ENCODE measurements at regions of chr13 and their contacts with region 1.

Region 1: GRCh38 chr13:30720172-30720869 is 15.0 kb upstream of the ALOX5AP start:
- DNase-seq: peak; percentile 59
- H3K4me3 ChIP-seq: no peak overlapping the region
- H3K27ac ChIP-seq: no peak overlapping the region
- H3K4me1 ChIP-seq: peaks cover 21% of the 10 kb centered on the region
- CTCF ChIP-seq: no peak

Region 2: GRCh38 chr13:30763786-30764413 is 43.6 kb after region 1 on chr13:
- CTCF ChIA-PET with region 1: no interaction called
- POLR2A ChIA-PET with region 1: no interaction called
- intact Hi-C with region 1: loop called (anchors 1 kb)
- DNase-seq: no peak
- H3K4me3 ChIP-seq: no peak overlapping the region
- H3K27ac ChIP-seq: no peak overlapping the region
- H3K4me1 ChIP-seq: peaks cover 22% of the 10 kb centered on the region
- CTCF ChIP-seq: no peak

Measured in OCI-LY7 (cell line).